Activated naive CD4-positive, alpha-beta T cell treated with anti-CD3 and anti-CD28 coated beads for 36 hours (primary cell): ENCODE measurements at regions of chr1 and their contacts with region 1.

Region 1: DNA sequence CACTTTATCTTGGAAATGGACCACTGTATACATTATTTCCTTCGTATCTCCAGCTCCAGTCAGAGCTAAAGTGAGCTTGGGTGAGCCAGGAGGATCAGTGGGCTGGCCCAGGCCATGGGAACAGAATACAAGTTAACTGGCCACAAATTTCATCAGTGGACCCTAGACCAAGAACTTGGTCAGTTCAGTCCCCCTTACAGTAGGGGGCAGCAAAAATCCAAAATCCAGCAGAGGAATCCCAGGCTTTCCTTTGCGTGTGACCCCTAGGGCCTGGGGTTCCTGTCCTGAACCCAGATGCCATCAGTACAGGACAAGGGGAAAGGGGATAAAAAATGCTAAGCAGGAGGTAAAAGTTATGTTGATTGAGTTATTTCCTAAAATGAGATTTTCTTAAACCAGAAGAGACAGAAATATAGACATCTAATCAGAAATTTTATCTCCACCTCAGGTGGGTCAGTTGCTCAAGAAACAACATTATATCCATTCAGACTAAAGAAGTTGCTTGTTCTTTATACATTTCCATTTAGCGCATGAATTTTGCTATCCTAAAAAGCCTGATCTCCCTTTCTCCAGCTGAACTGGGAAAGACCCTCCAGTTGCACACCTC is 24.1 kb upstream of the LCE5A start:
- DNase-seq: peak; percentile 8
- H3K4me3 Mint-ChIP-seq: no peak overlapping the region
- H3K27ac Mint-ChIP-seq: no peak overlapping the region
- H3K4me1 Mint-ChIP-seq: peaks cover 4% of the 10 kb centered on the region
- H3K27me3 Mint-ChIP-seq: peaks cover 2% of the 10 kb centered on the region

Region 2: GRCh38 chr1:152533327-152533938 is 46.9 kb after region 1 on chr1:
- CTCF ChIA-PET with region 1: interaction called, 3 read pairs
- intact Hi-C with region 1: loop called (anchors 2 kb)
- DNase-seq: peak; percentile 66
- H3K4me3 Mint-ChIP-seq: no peak overlapping the region
- H3K27ac Mint-ChIP-seq: no peak overlapping the region
- H3K4me1 Mint-ChIP-seq: no peaks in the 10 kb centered on the region
- H3K27me3 Mint-ChIP-seq: peaks cover 35% of the 10 kb centered on the region